ENCODE measurements at regions of chr14 and their contacts with region 1.

Region 1: GRCh38 chr14:22472935-22473854 is 115.8 kb downstream of the DAD1 start:
- DNase-seq: peak in 3 of 10 donors; percentile 57 to 69 (median 67)
- H3K4me3 ChIP-seq: no peak overlapping the region
- H3K27ac ChIP-seq: peak overlapping the region in 1 of 59 donors; percentile 38
- H3K27me3 ChIP-seq: peaks cover 0 to 25% (median 0%) of the 10 kb centered on the region in 45 donors
- CTCF ChIP-seq: peak; percentile 16 to 89 (median 70)

Region 2: DNA sequence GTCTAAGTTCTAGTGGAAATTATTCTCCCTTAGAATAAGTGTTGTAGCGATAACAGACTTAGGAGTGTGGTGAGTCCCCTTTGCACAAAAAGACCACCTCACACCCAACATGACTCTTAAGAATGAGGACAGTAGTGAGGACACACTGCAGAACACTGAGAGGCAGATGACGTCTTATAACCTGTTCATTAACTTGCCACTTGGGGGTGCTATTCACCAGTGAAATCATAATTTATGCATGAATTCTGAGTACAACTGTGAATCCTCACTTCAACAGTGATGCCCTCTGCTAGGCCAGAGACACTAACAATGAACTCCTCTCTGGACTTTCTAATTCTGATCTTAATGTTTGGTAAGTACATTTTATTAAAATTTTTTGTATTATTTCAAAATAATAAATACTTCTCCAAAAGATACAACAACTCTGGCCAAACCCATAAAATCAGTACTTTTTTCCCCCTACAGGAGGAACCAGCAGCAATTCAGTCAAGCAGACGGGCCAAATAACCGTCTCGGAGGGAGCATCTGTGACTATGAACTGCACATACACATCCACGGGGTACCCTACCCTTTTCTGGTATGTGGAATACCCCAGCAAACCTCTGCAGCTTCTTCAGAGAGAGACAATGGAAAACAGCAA is 158.9 kb before region 1 on chr14:
- intact Hi-C with region 1: loop called (anchors 1 to 10 kb)
- DNase-seq: peak in 1 of 10 donors; percentile 33
- H3K4me3 ChIP-seq: no peak overlapping the region
- H3K27ac ChIP-seq: peak overlapping the region in 23 of 59 donors; percentile 9 to 76 (median 54)
- H3K27me3 ChIP-seq: peaks cover 0 to 6% (median 0%) of the 10 kb centered on the region in 45 donors
- CTCF ChIP-seq: peak; percentile 39 to 90 (median 79)

Region 3: GRCh38 chr14:22429546-22430294 is 43.5 kb before region 1 on chr14:
- intact Hi-C with region 1: loop called in 1 of 2 experiments (anchors 2 kb)
- DNase-seq: no peak
- H3K4me3 ChIP-seq: no peak overlapping the region
- H3K27ac ChIP-seq: peak overlapping the region in 2 of 59 donors; percentile 13 to 27
- H3K27me3 ChIP-seq: no peaks in the 10 kb centered on the region
- CTCF ChIP-seq: no peak

Measured in dorsolateral prefrontal cortex (tissue), 120 donors.